Kidney (tissue), 22 donors: ENCODE measurements at regions of chr3 and their contacts with region 1.

Region 1: GRCh38 chr3:126982471-126983175 is at the start of gene PLXNA1:
- DNase-seq: peak; percentile 74 to 92 (median 75)
- H3K4me3 ChIP-seq: peak within 1 kb of the TSS in 2 of 3 donors; percentile 23 to 56
- H3K27ac ChIP-seq: peak within 1 kb of the TSS; percentile 8 to 57
- H3K4me1 ChIP-seq: peaks cover 0 to 10% (median 0%) of the 10 kb centered on the region in 3 donors
- H3K27me3 ChIP-seq: no peaks in the 10 kb centered on the region
- CTCF ChIP-seq: peak; percentile 66
- total RNA-seq, gene PLXNA1: 29.0 TPM

Region 2: GRCh38 chr3:126548556-126549466 is 433.8 kb before region 1 on chr3:
- intact Hi-C with region 1: no loop called
- DNase-seq: peak in 2 of 5 donors; percentile 14 to 34
- H3K4me3 ChIP-seq: no peak overlapping the region
- H3K27ac ChIP-seq: no peak overlapping the region
- H3K4me1 ChIP-seq: no peaks in the 10 kb centered on the region
- H3K27me3 ChIP-seq: no peaks in the 10 kb centered on the region
- CTCF ChIP-seq: no peak

Region 3: GRCh38 chr3:126752303-126752842 is 230.2 kb before region 1 on chr3:
- intact Hi-C with region 1: loop called (anchors 10 kb)
- DNase-seq: peak; percentile 81 to 88 (median 85)
- H3K4me3 ChIP-seq: no peak overlapping the region
- H3K27ac ChIP-seq: no peak overlapping the region
- H3K4me1 ChIP-seq: no peaks in the 10 kb centered on the region
- H3K27me3 ChIP-seq: no peaks in the 10 kb centered on the region
- CTCF ChIP-seq: peak; percentile 79

Region 4: DNA sequence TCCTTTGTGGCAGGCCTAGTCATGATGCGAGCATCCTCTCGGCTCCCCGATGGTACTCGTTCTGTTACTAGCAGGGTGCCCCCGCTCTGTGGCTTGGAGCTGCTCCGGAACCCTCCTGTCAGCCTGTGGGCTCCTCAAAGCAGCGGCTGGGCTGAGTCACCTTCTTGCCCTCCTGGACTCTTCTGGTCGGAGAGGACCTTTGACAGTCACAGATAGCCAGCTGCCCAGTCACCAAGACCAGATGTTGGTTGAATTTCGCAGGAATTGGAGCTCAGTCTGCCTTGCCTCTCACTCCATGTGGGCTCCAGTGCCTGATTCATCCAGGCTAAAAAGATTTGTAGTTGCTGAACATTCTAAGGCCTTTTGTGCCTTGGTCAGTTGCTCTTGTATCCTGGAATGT is 184.1 kb before region 1 on chr3:
- intact Hi-C with region 1: no loop called
- DNase-seq: no peak
- H3K4me3 ChIP-seq: no peak overlapping the region
- H3K27ac ChIP-seq: no peak overlapping the region
- H3K4me1 ChIP-seq: no peaks in the 10 kb centered on the region
- H3K27me3 ChIP-seq: no peaks in the 10 kb centered on the region
- CTCF ChIP-seq: no peak

Region 5: DNA sequence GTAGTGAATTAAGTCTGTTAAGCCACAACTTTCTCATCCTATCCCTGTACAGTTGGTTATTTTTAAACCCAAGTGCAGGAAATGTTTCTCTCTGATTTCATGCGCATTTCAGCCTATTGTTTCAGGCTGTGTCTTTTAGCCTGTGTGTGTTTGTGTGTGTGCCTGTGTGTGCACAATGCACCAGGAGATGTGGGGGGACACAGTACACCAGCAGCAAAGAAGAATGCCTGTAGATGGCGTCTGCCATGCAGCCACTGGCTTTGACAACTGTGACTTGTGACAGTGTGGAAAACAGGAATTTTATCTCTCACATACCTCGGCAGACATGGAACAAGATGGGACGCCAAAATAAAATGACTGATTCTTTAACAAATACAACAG is 43.3 kb before region 1 on chr3:
- intact Hi-C with region 1: no loop called
- DNase-seq: peak in 1 of 5 donors; percentile 30
- H3K4me3 ChIP-seq: no peak overlapping the region
- H3K27ac ChIP-seq: no peak overlapping the region
- H3K4me1 ChIP-seq: peaks cover 0 to 6% (median 0%) of the 10 kb centered on the region in 3 donors
- H3K27me3 ChIP-seq: peaks cover 2% of the 10 kb centered on the region
- CTCF ChIP-seq: peak; percentile 15

Region 6: DNA sequence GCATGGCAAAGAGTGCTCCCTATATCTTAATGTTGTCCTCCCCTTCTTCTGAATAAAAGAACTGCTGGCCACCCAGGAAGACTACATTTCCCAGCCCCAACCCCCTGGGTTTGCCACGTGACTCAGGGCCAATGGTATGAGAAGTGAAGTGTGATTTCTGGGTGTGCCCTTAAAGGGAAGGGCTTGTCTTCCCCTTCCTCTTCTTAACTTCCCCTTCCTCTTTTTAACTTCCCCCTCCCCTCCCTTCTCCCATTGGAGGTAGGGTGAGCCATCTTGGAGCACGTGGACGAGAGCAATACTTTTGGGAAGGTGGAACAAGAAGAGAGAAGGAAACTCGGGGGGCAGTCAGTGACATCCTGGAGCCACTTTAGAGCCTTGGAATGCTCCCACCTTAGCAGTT is 925.6 kb after region 1 on chr3:
- intact Hi-C with region 1: no loop called
- DNase-seq: no peak
- H3K4me3 ChIP-seq: no peak overlapping the region
- H3K27ac ChIP-seq: no peak overlapping the region
- H3K4me1 ChIP-seq: no peaks in the 10 kb centered on the region
- H3K27me3 ChIP-seq: no peaks in the 10 kb centered on the region
- CTCF ChIP-seq: no peak